Psoas muscle (tissue), 8 donors: ENCODE measurements at regions of chr5 and their contacts with region 1.

Region 1: GRCh38 chr5:175534070-175534932 is 55.9 kb downstream of the SFXN1 start:
- DNase-seq: peak; percentile 72 to 87
- ATAC-seq: peak; percentile 94 to 99 (median 98)
- H3K4me3 ChIP-seq: no peak overlapping the region
- H3K27ac ChIP-seq: no peak overlapping the region
- H3K4me1 ChIP-seq: no peaks in the 10 kb centered on the region
- H3K27me3 ChIP-seq: no peaks in the 10 kb centered on the region
- CTCF ChIP-seq: peak; percentile 92

Region 2: GRCh38 chr5:175718401-175719108 is 184.3 kb after region 1 on chr5:
- intact Hi-C with region 1: loop called (anchors 2 to 5 kb)
- DNase-seq: peak in 1 of 2 donors; percentile 49
- ATAC-seq: peak in 3 of 4 donors; percentile 41 to 62 (median 58)
- H3K4me3 ChIP-seq: no peak overlapping the region
- H3K27ac ChIP-seq: no peak overlapping the region
- H3K4me1 ChIP-seq: no peaks in the 10 kb centered on the region
- H3K27me3 ChIP-seq: peaks cover 0 to 2% (median 0%) of the 10 kb centered on the region in 3 donors
- CTCF ChIP-seq: peak; percentile 73